IMR-90 (cell line): ENCODE measurements at regions of chr14 and their contacts with region 1.

Region 1: GRCh38 chr14:86654558-86655184 is 1124.7 kb downstream of the FLRT2 start:
- DNase-seq: peak; percentile 26
- ATAC-seq: no peak
- H3K4me3 ChIP-seq: no peak overlapping the region
- H3K27ac ChIP-seq: no peak overlapping the region
- H3K4me1 ChIP-seq: peaks cover 1% of the 10 kb centered on the region; the same call in 1 of the 2 replicates
- H3K27me3 ChIP-seq: no peaks in the 10 kb centered on the region
- CTCF ChIP-seq: peak; percentile 36
- POLR2A ChIP-seq: no peak
- RAD21 ChIP-seq: peak; percentile 25; the same call in 1 of the 2 replicates

Region 2: GRCh38 chr14:86296173-86296572 is 358.5 kb before region 1 on chr14:
- CTCF ChIA-PET with region 1: no interaction called
- POLR2A ChIA-PET with region 1: no interaction called
- dilution Hi-C with region 1: no loop called
- in situ Hi-C with region 1: no loop called
- intact Hi-C with region 1: loop called (anchors 10 kb)
- DNase-seq: peak; percentile 80
- ATAC-seq: peak; percentile 93
- H3K4me3 ChIP-seq: no peak overlapping the region
- H3K27ac ChIP-seq: no peak overlapping the region
- H3K4me1 ChIP-seq: peaks cover 5% of the 10 kb centered on the region
- H3K27me3 ChIP-seq: no peaks in the 10 kb centered on the region
- CTCF ChIP-seq: no peak
- POLR2A ChIP-seq: no peak
- RAD21 ChIP-seq: no peak

Region 3: DNA sequence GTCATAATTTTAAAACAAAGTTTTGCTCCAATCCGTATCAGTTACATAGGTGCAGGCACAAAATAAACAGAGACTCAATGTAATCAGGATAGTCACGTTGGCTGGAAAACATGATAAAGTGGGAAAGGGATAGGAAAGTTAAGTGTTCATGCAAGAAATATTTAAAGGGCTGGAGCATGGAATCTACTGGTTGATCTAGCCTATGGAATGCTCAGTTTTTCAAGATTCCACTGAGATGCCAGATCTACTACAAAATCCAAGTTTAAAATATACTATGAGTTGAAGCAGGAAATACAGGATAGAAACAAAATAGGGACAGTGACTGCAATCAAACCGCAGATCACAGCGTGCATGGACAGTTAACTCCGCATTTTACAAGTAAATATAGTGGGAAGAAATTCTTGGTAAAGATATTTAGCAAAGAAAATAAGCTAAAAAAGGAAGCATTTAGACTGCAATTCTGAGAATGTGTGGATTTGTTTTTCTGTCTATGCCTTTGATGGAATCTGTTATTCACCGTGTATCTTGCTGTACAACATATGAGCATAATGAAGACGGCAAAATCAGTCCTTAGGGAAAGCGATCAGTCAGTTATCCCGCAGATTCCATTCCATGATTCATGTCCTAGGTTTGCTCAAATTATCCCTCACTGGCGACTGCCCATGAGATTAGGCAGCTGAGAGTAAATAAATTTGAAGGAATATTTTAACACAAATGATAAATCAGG is 80.5 kb before region 1 on chr14:
- CTCF ChIA-PET with region 1: no interaction called
- POLR2A ChIA-PET with region 1: no interaction called
- dilution Hi-C with region 1: no loop called
- in situ Hi-C with region 1: no loop called
- intact Hi-C with region 1: loop called (anchors 2 kb)
- DNase-seq: peak; percentile 79
- ATAC-seq: peak; percentile 91
- H3K4me3 ChIP-seq: peak overlapping the region; percentile 13; the same call in 1 of the 2 replicates
- H3K27ac ChIP-seq: no peak overlapping the region
- H3K4me1 ChIP-seq: peaks cover 3% of the 10 kb centered on the region; the same call in 1 of the 2 replicates
- H3K27me3 ChIP-seq: no peaks in the 10 kb centered on the region
- CTCF ChIP-seq: no peak
- POLR2A ChIP-seq: no peak
- RAD21 ChIP-seq: no peak

Region 4: GRCh38 chr14:86708846-86709339 is 54.2 kb after region 1 on chr14:
- CTCF ChIA-PET with region 1: no interaction called
- POLR2A ChIA-PET with region 1: no interaction called
- dilution Hi-C with region 1: no loop called
- in situ Hi-C with region 1: no loop called
- intact Hi-C with region 1: no loop called
- DNase-seq: no peak
- ATAC-seq: no peak
- H3K4me3 ChIP-seq: no peak overlapping the region
- H3K27ac ChIP-seq: no peak overlapping the region
- H3K4me1 ChIP-seq: no peaks in the 10 kb centered on the region
- H3K27me3 ChIP-seq: no peaks in the 10 kb centered on the region
- CTCF ChIP-seq: no peak
- POLR2A ChIP-seq: no peak
- RAD21 ChIP-seq: no peak